Endothelial cell of umbilical vein (primary cell): ENCODE measurements at regions of chrX and their contacts with region 1.

Region 1: DNA sequence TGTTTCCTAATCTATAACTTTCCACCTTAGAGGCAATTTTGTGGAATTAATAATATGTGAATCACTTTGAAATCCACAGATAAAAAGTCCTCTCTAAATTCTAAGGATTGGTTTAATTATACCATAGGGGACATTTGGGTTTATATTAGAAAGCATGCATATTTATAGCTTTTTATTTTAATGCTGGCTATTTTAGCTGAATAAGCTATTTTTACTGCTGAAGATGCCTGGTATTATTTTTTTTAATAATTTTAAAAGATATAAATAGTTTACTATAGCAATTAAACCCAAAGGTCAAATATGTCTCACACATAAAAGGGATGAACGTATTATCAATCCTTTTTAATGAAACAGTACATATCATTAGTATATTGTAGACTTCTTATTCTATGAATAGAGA is 415.4 kb downstream of the MAGEB5 start:
- DNase-seq: no peak
- H3K4me3 ChIP-seq: no peak overlapping the region
- H3K27ac ChIP-seq: no peak overlapping the region
- H3K4me1 ChIP-seq: no peaks in the 10 kb centered on the region
- H3K27me3 ChIP-seq: no peaks in the 10 kb centered on the region
- CTCF ChIP-seq: no peak
- POLR2A ChIP-seq: no peak

Region 2: GRCh38 chrX:26050099-26050498 is 581.3 kb before region 1 on chrX:
- CTCF ChIA-PET with region 1: no interaction called
- POLR2A ChIA-PET with region 1: no interaction called
- dilution Hi-C with region 1: no loop called
- intact Hi-C with region 1: loop called (anchors 10 kb)
- DNase-seq: no peak
- H3K4me3 ChIP-seq: no peak overlapping the region
- H3K27ac ChIP-seq: no peak overlapping the region
- H3K4me1 ChIP-seq: no peaks in the 10 kb centered on the region
- H3K27me3 ChIP-seq: no peaks in the 10 kb centered on the region
- CTCF ChIP-seq: no peak
- POLR2A ChIP-seq: no peak